ENCODE measurements at regions of chr1 and their contacts with region 1.

Region 1: DNA sequence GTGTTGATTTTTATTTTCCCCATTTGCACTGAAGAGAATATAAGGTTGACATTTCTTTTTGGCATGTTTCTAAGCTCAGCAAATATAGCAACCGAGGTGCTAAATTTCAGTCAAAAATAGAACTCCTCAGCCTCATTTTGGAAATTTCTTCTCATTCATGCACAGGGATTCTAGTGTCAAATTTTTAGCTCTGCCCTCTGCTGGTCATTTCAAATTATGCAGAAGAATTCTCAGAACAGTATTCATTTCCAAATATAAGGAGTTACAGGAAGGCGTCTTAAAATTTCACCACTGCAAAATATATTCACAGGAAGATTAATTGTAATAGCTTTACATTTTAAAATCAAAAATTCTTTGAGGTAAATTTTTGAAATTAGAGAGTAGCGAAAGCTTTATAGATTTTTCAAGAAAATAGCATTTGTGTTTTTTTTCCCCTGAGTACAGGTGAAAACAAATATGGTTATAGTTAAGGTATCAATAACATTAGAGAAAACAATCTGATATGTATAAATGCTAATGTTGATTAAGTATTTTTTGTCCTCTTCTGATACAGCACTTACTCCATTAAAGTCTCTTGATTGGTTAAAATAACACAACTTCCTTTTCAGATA is 57.9 kb downstream of the FMN2 start:
- DNase-seq: no peak
- H3K4me3 ChIP-seq: no peak overlapping the region
- H3K27ac ChIP-seq: no peak overlapping the region
- H3K4me1 ChIP-seq: no peaks in the 10 kb centered on the region
- H3K27me3 ChIP-seq: no peaks in the 10 kb centered on the region
- CTCF ChIP-seq: peak in 2 of 3 experiments; percentile 37 to 47; a peak in 2 of 4 replicates
- EP300 ChIP-seq: no peak
- POLR2A ChIP-seq: no peak
- RAD21 ChIP-seq: peak; percentile 46 to 50

Region 2: DNA sequence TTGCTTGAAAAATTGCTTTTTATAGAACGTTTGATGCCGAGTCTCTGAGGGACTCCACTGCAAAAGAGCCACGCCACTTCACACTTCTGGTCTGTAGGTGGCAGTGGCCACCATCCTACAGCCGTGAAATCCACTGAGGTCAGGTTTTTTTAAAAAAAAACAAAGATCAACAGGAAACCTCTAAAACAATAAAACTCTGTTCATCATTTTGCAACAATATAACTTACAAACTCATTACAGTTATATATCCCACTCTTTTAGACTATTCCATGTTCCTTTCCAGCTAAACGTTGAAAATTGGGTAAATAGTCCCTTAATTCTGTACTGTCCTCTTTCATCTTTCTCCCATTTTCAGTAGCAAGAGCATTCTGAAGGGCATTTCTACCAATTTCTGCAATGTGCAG is 122.5 kb before region 1 on chr1:
- CTCF ChIA-PET with region 1: interaction called, 20 read pairs
- POLR2A ChIA-PET with region 1: no interaction called
- DNase-seq: peak in 1 of 2 experiments; percentile 57
- H3K4me3 ChIP-seq: no peak overlapping the region
- H3K27ac ChIP-seq: no peak overlapping the region
- H3K4me1 ChIP-seq: no peaks in the 10 kb centered on the region
- H3K27me3 ChIP-seq: no peaks in the 10 kb centered on the region
- CTCF ChIP-seq: peak; percentile 70 to 85 (median 74)
- EP300 ChIP-seq: no peak
- POLR2A ChIP-seq: no peak
- RAD21 ChIP-seq: peak; percentile 91 to 93

Region 3: GRCh38 chr1:240100371-240100934 is 49.1 kb before region 1 on chr1:
- CTCF ChIA-PET with region 1: interaction called, 21 read pairs
- POLR2A ChIA-PET with region 1: no interaction called
- DNase-seq: no peak
- H3K4me3 ChIP-seq: no peak overlapping the region
- H3K27ac ChIP-seq: no peak overlapping the region
- H3K4me1 ChIP-seq: peaks cover 2 to 7% (median 5%) of the 10 kb centered on the region in 4 experiments; a peak in 4 of 7 replicates
- H3K27me3 ChIP-seq: no peaks in the 10 kb centered on the region
- CTCF ChIP-seq: no peak
- EP300 ChIP-seq: no peak
- POLR2A ChIP-seq: no peak
- RAD21 ChIP-seq: no peak

Region 4: GRCh38 chr1:240122639-240123613 is 26.7 kb before region 1 on chr1:
- CTCF ChIA-PET with region 1: interaction called, 11 read pairs
- POLR2A ChIA-PET with region 1: no interaction called
- DNase-seq: no peak
- H3K4me3 ChIP-seq: no peak overlapping the region
- H3K27ac ChIP-seq: no peak overlapping the region
- H3K4me1 ChIP-seq: no peaks in the 10 kb centered on the region
- H3K27me3 ChIP-seq: no peaks in the 10 kb centered on the region
- CTCF ChIP-seq: no peak
- EP300 ChIP-seq: no peak
- POLR2A ChIP-seq: no peak
- RAD21 ChIP-seq: no peak

Region 5: GRCh38 chr1:240138867-240139266 is 10.7 kb before region 1 on chr1:
- CTCF ChIA-PET with region 1: interaction called, 18 read pairs
- POLR2A ChIA-PET with region 1: no interaction called
- DNase-seq: peak in 1 of 2 experiments; percentile 49
- H3K4me3 ChIP-seq: no peak overlapping the region
- H3K27ac ChIP-seq: no peak overlapping the region
- H3K4me1 ChIP-seq: peaks cover 0 to 3% (median 0%) of the 10 kb centered on the region in 4 experiments; a peak in 1 of 7 replicates
- H3K27me3 ChIP-seq: no peaks in the 10 kb centered on the region
- CTCF ChIP-seq: no peak
- EP300 ChIP-seq: no peak
- POLR2A ChIP-seq: no peak
- RAD21 ChIP-seq: no peak

Region 6: GRCh38 chr1:240164742-240165141 is 15.2 kb after region 1 on chr1:
- CTCF ChIA-PET with region 1: interaction called, 25 read pairs
- POLR2A ChIA-PET with region 1: no interaction called
- DNase-seq: no peak
- H3K4me3 ChIP-seq: no peak overlapping the region
- H3K27ac ChIP-seq: no peak overlapping the region
- H3K4me1 ChIP-seq: no peaks in the 10 kb centered on the region
- H3K27me3 ChIP-seq: no peaks in the 10 kb centered on the region
- CTCF ChIP-seq: no peak
- EP300 ChIP-seq: no peak
- POLR2A ChIP-seq: no peak
- RAD21 ChIP-seq: no peak

Region 7: DNA sequence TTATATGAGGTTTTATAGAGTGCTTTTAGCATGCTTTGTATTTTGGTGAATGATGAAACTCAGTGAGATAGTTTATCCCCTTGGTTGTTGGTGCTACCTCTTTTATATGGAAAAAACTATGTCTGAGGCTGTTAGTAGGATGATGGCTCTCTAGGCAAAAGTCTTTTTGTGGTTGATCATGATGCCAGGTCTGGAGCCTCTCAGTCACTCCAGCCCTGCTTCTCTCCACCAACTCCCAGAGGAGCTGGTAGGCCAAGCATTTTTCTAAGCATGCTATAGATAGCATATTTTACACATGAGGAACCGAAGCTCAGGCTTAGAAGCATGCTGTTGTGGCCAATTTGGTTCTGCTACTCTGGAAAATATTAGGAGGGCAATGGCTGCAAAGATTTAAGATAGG is 24.2 kb after region 1 on chr1:
- CTCF ChIA-PET with region 1: interaction called, 11 read pairs
- POLR2A ChIA-PET with region 1: no interaction called
- DNase-seq: no peak
- H3K4me3 ChIP-seq: no peak overlapping the region
- H3K27ac ChIP-seq: no peak overlapping the region
- H3K4me1 ChIP-seq: no peaks in the 10 kb centered on the region
- H3K27me3 ChIP-seq: no peaks in the 10 kb centered on the region
- CTCF ChIP-seq: no peak
- EP300 ChIP-seq: no peak
- POLR2A ChIP-seq: no peak
- RAD21 ChIP-seq: no peak